Activated CD4-positive, alpha-beta T cell treated with anti-CD3 and anti-CD28 coated beads for 36 hours (primary cell): ENCODE measurements at regions of chr2 and their contacts with region 1.

Region 1: GRCh38 chr2:219498280-219499057 is at the start of gene GMPPA:
- DNase-seq: peak; percentile 96
- ATAC-seq: peak; percentile 97
- H3K4me3 Mint-ChIP-seq: peak within 1 kb of the TSS; percentile 86
- H3K27ac Mint-ChIP-seq: peak within 1 kb of the TSS; percentile 72
- H3K4me1 Mint-ChIP-seq: peaks cover 38% of the 10 kb centered on the region
- H3K27me3 Mint-ChIP-seq: peaks cover 38% of the 10 kb centered on the region
- total RNA-seq, gene GMPPA: 35.2 to 35.5 TPM

Region 2: GRCh38 chr2:219402665-219403515 is 95.6 kb before region 1 on chr2:
- CTCF ChIA-PET with region 1: interaction called, 10 read pairs
- POLR2A ChIA-PET with region 1: no interaction called
- intact Hi-C with region 1: loop called in 1 of 2 experiments (anchors 1 kb)
- DNase-seq: peak; percentile 78
- ATAC-seq: peak; percentile 95
- H3K4me3 Mint-ChIP-seq: no peak overlapping the region
- H3K27ac Mint-ChIP-seq: no peak overlapping the region
- H3K4me1 Mint-ChIP-seq: peaks cover 1% of the 10 kb centered on the region
- H3K27me3 Mint-ChIP-seq: peaks cover 2% of the 10 kb centered on the region

Region 3: DNA sequence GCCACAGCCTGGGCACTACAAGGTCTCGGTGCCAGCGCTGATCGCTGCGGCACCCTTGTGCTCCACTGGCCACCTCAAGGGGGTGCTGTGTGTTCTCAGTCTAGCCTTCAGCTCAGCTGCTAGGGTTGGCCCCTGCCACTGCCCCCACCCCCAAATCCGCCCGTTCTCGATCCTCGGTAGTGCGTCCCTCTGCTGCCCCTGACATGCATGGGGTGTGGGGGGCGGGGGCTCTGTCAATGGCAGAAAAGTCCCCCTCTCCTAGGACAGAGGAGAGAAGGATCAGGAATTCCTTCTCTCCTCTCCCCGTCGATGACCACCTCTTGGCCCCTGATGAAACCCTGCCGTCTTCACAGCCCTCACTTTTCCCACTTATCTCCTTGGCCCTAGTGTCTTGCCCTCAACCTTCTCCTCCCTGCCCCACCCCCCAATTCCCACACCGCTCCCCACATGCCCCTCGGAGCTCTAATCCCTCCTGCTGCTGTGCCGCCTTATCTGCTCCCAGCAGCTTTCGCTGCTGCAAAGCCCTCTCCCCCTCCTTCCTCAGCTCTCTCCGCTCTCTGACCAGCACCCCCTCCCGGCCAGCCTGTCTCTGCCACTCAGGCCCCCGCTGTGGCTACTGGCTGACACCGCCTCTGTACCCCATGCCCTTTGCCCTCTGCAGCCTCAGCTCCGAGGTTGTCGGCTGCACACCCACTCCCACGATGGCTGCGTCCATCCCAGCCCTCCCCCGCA is 11.5 kb after region 1 on chr2:
- CTCF ChIA-PET with region 1: interaction called, 46 read pairs
- POLR2A ChIA-PET with region 1: interaction called, 4 read pairs
- intact Hi-C with region 1: no loop called
- DNase-seq: peak; percentile 77
- ATAC-seq: peak; percentile 91
- H3K4me3 Mint-ChIP-seq: no peak overlapping the region
- H3K27ac Mint-ChIP-seq: no peak overlapping the region
- H3K4me1 Mint-ChIP-seq: peaks cover 20% of the 10 kb centered on the region
- H3K27me3 Mint-ChIP-seq: peaks cover 44% of the 10 kb centered on the region

Region 4: GRCh38 chr2:219552382-219553167 is 54.1 kb after region 1 on chr2:
- CTCF ChIA-PET with region 1: interaction called, 5 read pairs
- POLR2A ChIA-PET with region 1: no interaction called
- intact Hi-C with region 1: loop called (anchors 1 to 2 kb)
- DNase-seq: peak; percentile 89
- ATAC-seq: peak; percentile 94
- H3K4me3 Mint-ChIP-seq: peak overlapping the region; percentile 66
- H3K27ac Mint-ChIP-seq: no peak overlapping the region
- H3K4me1 Mint-ChIP-seq: peaks cover 5% of the 10 kb centered on the region
- H3K27me3 Mint-ChIP-seq: peaks cover 31% of the 10 kb centered on the region